Activated CD4-positive, alpha-beta memory T cell treated with anti-CD3 and anti-CD28 coated beads for 36 hours (primary cell): ENCODE measurements at regions of chr20 and their contacts with region 1.

Region 1: GRCh38 chr20:41047975-41048305 is 19.3 kb downstream of the TOP1 start:
- DNase-seq: no peak
- H3K4me3 Mint-ChIP-seq: peak overlapping the region; percentile 76
- H3K27ac Mint-ChIP-seq: peak overlapping the region; percentile 87
- H3K4me1 Mint-ChIP-seq: peaks cover 93% of the 10 kb centered on the region
- H3K27me3 Mint-ChIP-seq: no peaks in the 10 kb centered on the region

Region 2: DNA sequence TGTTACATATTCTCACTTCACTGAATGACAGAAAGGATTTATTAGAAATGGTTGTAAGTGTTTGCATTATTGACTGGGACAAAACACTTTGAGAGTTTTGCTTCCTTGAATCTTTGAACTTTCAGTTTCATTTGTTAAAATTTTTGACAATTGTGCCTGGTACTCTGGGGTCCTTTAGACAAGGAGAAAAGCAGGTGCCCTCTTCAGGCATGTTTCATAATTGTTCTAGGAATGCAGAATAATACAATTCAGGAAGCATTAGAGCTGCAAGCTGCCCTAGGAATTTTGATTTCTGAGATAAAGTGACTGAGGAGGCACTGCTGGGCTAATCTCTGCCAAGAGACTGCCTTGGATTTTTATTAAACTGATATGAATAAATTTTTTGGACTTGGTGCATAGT is 30.4 kb after region 1 on chr20:
- CTCF ChIA-PET with region 1: interaction called, 3 read pairs
- POLR2A ChIA-PET with region 1: interaction called, 3 read pairs
- intact Hi-C with region 1: loop called (anchors 2 kb)
- DNase-seq: no peak
- H3K4me3 Mint-ChIP-seq: no peak overlapping the region
- H3K27ac Mint-ChIP-seq: peak overlapping the region; percentile 50
- H3K4me1 Mint-ChIP-seq: peaks cover 54% of the 10 kb centered on the region
- H3K27me3 Mint-ChIP-seq: no peaks in the 10 kb centered on the region